Cardiac septum (tissue), 1 donor: ENCODE measurements at regions of chr2 and their contacts with region 1.

Region 1: GRCh38 chr2:9142551-9143263 is 63.9 kb upstream of the ASAP2 start:
- DNase-seq: peak; percentile 93

Region 2: GRCh38 chr2:8872821-8873432 is 269.8 kb before region 1 on chr2:
- intact Hi-C with region 1: loop called (anchors 2 kb)
- DNase-seq: no peak

Region 3: DNA sequence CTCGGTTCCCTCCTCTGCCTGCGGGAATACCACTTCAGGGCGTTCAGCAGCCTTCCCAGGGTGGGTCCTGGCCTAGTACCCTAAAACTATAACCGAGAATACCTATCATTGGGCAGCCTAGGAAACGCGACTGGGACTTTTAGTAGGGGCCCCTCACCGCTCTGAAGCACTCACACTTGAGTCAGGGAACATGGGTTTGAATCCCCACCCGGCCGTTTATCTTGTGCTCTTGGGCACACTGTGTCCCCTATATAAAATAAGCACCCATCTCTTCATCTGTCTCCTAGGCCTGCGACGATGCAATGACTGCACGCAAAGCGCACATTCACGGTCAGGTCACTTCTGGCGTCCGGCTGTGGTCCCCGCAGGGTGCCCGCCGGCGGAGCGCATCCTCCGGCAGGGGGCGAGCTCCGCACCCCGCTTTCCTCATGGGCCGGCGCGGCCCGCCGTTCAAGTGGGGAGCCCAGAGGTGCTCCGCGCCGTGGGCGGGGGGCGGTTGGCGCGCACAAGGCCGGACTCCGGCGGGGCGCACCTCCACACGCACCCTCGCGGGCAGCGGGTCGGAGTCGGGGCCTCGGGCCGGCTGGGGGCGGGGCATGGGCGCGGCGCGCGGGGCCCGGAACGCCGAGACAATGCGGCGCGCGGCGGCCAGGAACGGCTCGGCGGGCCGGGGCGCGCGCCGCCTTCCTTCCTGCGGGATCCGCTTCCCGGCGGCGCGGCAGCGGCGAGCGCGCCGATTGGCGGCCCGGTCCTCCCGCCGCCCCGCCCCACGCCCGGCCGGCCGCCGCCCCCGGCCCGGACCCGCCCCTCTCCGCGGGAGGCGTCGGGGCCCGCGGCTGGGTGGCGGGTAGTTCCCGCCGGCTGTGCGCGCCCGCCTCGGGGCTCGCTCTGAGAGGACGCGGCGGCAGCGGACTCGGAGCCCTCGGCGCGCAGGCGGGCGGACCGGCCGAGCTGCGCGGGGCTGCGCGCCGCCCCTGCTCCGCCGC is 63.5 kb after region 1 on chr2 and contains the start of gene ASAP2:
- intact Hi-C with region 1: loop called (anchors 5 kb)
- DNase-seq: peak; percentile 87
- total RNA-seq, gene ASAP2: 11.8 TPM

Region 4: GRCh38 chr2:9333591-9334171 is 191.0 kb after region 1 on chr2:
- intact Hi-C with region 1: loop called (anchors 1 kb)
- DNase-seq: no peak

Region 5: GRCh38 chr2:9378433-9379390 is 236.0 kb after region 1 on chr2:
- intact Hi-C with region 1: loop called (anchors 5 kb)
- DNase-seq: no peak

Region 6: GRCh38 chr2:9423100-9423921 is 280.6 kb after region 1 on chr2 and contains the starts of genes CPSF3 and ITGB1BP1:
- intact Hi-C with region 1: loop called (anchors 2 kb)
- DNase-seq: peak; percentile 97
- total RNA-seq, gene CPSF3: 17.1 TPM
- total RNA-seq, gene ITGB1BP1: 160 TPM